ENCODE measurements at regions of chr12 and their contacts with region 1.

Region 1: GRCh38 chr12:111789785-111790184 is 23.1 kb downstream of the ALDH2 start:
- DNase-seq: no peak

Region 2: DNA sequence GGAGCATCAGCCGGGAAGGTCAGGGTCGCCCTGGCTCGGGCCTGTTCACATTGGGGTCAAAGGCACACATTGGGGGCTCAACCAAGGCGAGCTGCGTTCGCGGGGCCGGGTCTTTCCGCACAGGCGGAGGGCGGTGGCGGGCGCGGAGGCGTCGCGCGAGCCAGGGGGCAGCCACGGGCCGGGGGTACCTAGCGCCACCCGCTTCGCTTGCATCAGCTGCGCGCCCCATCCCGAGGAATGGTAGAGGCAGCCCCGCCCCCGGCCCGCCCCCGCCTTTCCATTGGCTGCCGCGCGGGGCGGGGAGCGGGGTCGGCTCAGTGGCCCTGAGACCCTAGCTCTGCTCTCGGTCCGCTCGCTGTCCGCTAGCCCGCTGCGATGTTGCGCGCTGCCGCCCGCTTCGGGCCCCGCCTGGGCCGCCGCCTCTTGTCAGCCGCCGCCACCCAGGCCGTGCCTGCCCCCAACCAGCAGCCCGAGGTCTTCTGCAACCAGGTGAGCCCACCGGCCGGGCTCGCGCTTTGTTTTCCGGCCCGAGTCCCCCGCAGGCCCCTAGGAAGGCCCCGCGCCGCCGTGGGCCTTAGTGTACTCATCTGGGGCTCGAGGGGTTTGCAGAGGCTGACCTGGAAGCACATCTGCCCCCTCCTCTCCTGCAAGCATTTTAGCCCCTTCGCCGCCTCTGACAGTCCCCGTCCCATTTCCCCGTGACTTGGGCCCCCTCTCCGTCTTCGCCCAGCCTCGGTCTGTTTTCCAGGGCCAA is 23.0 kb before region 1 on chr12 and contains the start of gene ALDH2:
- CTCF ChIA-PET with region 1: no interaction called
- POLR2A ChIA-PET with region 1: no interaction called
- DNase-seq: peak; percentile 81

Region 3: GRCh38 chr12:111846016-111846415 is 56.2 kb after region 1 on chr12:
- CTCF ChIA-PET with region 1: no interaction called
- POLR2A ChIA-PET with region 1: no interaction called
- DNase-seq: no peak

Region 4: DNA sequence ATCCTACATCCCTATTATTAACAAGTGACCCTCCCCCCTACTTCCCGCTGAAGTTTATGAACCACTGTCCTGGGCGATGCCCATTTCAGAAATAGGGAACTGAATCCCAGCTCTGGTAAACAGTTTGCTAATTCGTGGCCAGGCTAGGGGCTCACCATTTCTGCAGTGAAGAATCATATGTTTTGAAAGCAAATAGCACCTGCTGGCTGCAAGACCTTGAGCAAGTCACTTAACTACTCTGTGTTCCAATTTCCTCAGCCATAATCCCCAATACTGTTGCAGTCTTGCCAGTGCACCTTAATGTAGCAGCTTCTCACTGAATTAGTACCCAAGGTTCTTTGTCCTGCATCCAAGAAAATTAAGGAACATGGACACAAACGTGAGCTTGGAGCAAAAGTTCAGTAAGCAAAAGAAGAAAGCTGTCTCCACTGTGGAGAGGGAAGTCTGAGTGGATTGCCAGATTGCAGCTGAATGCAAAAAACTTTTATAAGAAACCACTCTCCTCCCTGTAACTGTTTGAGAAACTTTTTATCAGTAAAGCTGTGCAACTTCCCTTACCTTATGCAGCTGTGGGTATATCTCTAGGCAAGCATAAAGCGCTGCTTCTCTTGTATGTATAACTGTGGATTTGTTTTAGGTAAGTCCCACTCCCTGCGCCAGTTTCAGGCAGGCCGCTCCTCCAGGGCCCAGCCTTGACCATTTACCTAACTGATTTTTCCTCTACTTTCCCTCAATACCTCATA is 1117.8 kb after region 1 on chr12:
- CTCF ChIA-PET with region 1: interaction called, 10 read pairs
- POLR2A ChIA-PET with region 1: no interaction called
- DNase-seq: no peak

Measured in HEK293T (cell line).